Activated CD4-positive, alpha-beta T cell treated with anti-CD3 and anti-CD28 coated beads, Interleukin-2, amount 10 ng/mL, durations not matched to agents 24 days and 14 days (primary cell): ENCODE measurements at regions of chr3 and their contacts with region 1.

Region 1: DNA sequence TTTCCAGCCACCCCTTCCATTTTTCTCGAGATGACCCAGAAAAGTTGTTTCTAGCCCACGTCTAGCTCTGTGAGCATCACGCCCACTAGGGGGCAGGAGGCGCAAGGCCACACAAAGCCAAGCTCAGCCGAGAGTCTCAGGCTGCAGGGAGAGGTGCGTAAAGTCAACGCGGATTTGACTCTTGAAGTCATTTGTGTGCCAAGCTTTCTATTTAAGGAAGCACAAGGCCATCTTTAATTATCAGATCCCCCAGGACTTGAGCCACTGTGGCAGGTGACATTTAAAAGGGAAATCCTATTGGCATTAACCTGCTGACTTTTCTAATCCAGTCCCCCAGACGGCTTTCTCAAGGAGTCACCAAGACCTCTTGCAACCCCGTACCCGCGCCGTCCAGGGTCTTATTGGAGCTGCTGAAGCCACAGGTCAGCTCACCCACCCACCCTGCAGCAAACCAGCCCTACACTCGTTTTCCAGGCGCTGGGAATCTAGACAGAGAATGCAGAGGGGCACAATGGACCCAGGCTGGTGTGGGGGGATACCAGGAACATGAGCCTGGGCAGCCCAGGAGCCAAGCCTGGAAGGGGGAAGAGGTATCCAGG is 62.1 kb downstream of the CAPN7 start:
- DNase-seq: peak; percentile 95
- H3K4me3 Mint-ChIP-seq: no peak overlapping the region
- H3K27ac Mint-ChIP-seq: no peak overlapping the region
- H3K4me1 Mint-ChIP-seq: peaks cover 45% of the 10 kb centered on the region
- H3K27me3 Mint-ChIP-seq: no peaks in the 10 kb centered on the region

Region 2: GRCh38 chr3:15098503-15099363 is 169.4 kb before region 1 on chr3 and contains the start of gene RBSN:
- intact Hi-C with region 1: no loop called
- DNase-seq: peak; percentile 99
- H3K4me3 Mint-ChIP-seq: peak within 1 kb of the TSS; percentile 90
- H3K27ac Mint-ChIP-seq: peak within 1 kb of the TSS; percentile 93
- H3K4me1 Mint-ChIP-seq: peaks cover 29% of the 10 kb centered on the region
- H3K27me3 Mint-ChIP-seq: no peaks in the 10 kb centered on the region
- total RNA-seq, gene RBSN: 13.2 and 15.0 TPM in 2 replicates

Region 3: GRCh38 chr3:15309662-15310335 is 41.7 kb after region 1 on chr3:
- intact Hi-C with region 1: loop called (anchors 1 kb)
- DNase-seq: no peak
- H3K4me3 Mint-ChIP-seq: peak overlapping the region; percentile 72
- H3K27ac Mint-ChIP-seq: peak overlapping the region; percentile 94
- H3K4me1 Mint-ChIP-seq: peaks cover 54% of the 10 kb centered on the region
- H3K27me3 Mint-ChIP-seq: no peaks in the 10 kb centered on the region

Region 4: GRCh38 chr3:15361494-15362212 is 93.5 kb after region 1 on chr3:
- intact Hi-C with region 1: loop called (anchors 1 kb)
- DNase-seq: peak; percentile 83
- H3K4me3 Mint-ChIP-seq: peak overlapping the region; percentile 52
- H3K27ac Mint-ChIP-seq: peak overlapping the region; percentile 60
- H3K4me1 Mint-ChIP-seq: peaks cover 39% of the 10 kb centered on the region
- H3K27me3 Mint-ChIP-seq: no peaks in the 10 kb centered on the region

Region 5: DNA sequence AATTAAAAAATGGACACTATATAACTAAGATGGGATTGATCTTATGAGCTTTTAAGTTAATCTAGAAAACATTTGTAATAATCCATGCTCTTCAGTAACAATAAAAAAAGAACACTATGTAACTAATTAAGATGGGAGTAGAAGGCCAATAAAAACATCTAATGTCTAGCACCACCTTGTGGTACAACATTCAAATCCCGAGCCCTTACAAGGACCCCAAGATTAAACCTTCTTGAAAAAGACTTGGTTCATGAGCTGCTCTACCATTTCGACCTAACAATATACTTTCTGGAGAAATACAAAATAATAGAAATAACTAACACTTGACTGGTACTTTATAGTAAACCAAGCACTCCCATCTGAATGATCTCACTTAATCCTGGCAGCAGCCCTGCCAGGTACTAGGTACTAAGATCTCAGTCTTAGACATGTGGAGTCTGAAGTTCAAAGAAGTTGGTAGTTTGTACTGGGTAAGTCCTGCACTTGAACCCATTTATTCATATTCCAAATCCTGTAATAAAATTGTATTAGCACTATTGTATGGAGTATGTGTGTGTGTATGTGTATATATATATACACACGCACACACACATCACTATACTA is 137.4 kb after region 1 on chr3:
- intact Hi-C with region 1: loop called (anchors 1 kb)
- DNase-seq: peak; percentile 77
- H3K4me3 Mint-ChIP-seq: no peak overlapping the region
- H3K27ac Mint-ChIP-seq: no peak overlapping the region
- H3K4me1 Mint-ChIP-seq: peaks cover 6% of the 10 kb centered on the region
- H3K27me3 Mint-ChIP-seq: no peaks in the 10 kb centered on the region

Region 6: DNA sequence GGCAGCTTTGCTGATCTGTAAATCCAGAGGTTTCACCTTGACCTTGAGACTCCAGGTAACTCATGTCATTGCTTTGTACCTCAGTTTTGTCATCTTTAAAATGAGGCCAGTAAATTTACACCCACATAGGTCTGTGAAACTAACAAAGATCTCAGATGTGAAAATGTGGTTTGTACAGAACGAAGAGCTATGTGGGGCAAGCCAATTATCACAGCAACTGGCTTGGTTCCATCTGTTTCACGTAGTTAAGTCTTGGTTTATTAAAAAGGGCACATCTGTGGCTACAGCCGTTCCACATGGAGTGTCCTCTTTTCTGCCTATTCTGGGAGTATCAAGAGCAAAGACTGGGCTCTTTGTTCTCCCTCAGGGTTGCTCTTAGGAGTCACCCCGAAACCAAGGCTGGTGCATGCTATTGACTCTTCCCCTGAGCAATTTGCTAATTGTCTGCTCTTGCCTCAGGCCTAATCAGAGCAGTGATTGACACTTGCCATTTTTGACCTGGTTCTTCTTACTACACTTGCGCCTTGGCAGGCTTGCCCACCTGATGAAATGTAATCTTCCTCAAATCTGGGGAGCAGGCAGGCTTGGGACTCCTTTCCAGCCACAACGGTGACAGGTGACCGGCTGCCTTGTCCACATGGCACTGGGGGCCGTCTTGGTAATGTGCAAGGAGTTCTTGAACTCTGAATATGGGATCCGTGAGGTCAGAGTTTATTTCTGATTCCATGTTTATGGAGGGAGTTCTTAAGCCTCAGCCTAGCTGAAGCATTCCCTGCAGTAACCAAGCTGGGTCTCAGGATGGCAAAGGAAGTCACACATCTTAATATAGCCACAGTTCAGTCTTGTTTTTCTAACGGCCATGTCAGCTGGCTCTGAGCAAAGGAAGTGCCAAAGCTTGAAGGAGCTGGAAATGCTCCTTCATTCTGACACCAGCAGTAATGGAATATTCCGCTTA is 199.4 kb after region 1 on chr3:
- intact Hi-C with region 1: no loop called
- DNase-seq: peak; percentile 54
- H3K4me3 Mint-ChIP-seq: no peak overlapping the region
- H3K27ac Mint-ChIP-seq: no peak overlapping the region
- H3K4me1 Mint-ChIP-seq: peaks cover 5% of the 10 kb centered on the region
- H3K27me3 Mint-ChIP-seq: peaks cover 7% of the 10 kb centered on the region

Region 7: DNA sequence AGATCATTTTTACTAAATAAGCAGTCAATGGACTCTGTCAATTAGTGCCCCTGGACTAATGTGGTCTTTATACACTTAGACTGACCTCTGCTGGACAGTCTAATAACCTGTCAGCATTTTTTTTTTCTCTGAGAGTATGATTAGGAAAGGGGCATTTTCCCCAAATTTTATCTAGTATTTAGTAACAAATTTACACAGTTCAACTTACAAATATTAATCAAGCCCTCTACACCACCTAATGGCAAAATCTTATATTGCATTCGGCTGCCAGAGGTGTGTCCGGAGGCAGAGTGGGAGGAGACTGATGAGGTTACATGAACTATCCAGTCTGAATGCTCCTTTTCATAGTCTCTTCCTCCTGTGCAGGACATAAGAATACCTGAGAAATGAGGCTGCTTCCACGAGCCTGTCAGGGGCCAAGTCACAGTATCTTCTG is 289.4 kb after region 1 on chr3:
- intact Hi-C with region 1: loop called (anchors 2 kb)
- DNase-seq: peak; percentile 93
- H3K4me3 Mint-ChIP-seq: no peak overlapping the region
- H3K27ac Mint-ChIP-seq: no peak overlapping the region
- H3K4me1 Mint-ChIP-seq: peaks cover 28% of the 10 kb centered on the region
- H3K27me3 Mint-ChIP-seq: no peaks in the 10 kb centered on the region

Region 8: DNA sequence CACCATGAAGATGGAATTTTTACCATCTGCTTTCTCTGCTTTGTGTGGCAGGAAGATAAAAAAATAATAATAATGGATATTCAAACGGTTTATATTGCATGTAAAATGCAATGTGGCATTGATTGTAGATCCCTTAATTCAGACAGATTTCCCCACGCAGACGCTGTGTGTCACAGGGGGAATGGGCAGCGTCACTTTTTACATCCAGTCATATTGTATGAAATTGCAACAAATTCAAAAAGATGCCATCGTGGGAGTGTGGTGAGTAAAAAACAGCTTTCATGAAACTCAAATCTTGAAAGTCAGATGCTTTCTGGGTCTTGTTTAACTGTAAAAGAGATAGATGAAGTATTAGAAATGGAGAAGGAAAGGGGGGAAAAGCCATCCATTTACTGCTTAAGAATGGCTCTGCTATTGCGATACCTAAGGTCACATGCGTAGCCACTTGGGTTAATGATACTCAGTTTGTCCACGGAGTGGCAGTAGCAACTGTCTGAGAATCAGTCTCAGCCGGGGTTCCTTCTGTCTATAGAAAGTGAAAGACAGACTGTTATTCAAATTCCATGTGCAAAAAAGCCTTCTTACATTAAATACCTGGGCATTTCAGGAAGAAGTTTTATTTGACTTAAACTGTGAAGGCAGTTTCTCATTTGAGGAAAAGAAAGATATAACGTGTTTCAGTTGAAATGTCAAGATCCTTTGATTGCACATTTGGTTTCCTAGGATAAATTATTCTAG is 361.9 kb after region 1 on chr3:
- intact Hi-C with region 1: no loop called
- DNase-seq: peak; percentile 92
- H3K4me3 Mint-ChIP-seq: peak overlapping the region; percentile 53
- H3K27ac Mint-ChIP-seq: peak overlapping the region; percentile 67
- H3K4me1 Mint-ChIP-seq: peaks cover 28% of the 10 kb centered on the region
- H3K27me3 Mint-ChIP-seq: no peaks in the 10 kb centered on the region